ENCODE measurements at regions of chr2 and their contacts with region 1.

Region 1: DNA sequence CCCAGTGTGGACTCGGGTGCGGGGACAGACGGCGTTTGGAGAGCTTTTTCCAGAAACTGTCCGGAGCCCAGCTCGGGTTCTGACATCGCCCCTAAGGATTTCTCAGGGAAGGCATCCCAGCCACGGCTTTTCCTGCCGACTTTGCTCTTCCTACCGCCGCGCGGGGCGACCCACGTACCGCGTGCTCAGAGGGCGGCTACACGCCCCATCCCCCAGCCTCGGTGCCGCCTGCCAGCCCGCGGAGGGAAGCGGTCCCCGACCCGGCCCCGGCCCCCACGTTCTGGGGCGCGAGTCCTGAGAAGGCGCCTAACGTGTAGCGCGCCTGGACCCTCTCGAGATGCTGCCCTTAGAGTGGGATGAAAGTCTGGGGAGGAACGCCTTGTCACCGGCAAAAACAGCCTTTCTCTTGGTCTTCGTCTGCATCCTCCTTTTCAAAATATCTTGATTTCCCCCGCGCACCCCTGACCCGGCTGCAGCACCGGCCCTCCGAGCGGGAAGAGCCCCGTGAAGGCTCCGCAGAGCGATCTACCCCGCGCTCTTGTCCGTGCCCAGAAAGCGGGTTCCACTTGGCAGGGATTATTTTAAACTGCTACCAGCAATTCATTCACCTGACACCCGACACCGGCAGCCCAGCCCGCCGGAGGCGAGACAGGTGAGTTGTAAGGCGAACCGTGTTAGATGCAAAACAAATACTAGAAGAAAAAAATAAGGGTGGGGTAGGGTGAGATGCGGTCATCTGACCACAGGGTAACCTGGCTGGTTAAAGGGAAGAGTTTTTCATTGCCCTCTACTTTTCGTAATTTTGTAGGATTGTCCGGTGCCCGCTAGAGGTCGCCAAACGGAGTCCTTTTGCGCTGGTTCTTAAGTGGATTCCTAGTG is 812 bp upstream of the KCNG3 start:
- DNase-seq: peak; percentile 76
- H3K4me3 Mint-ChIP-seq: peak overlapping the region; percentile 77
- H3K27ac Mint-ChIP-seq: no peak overlapping the region
- H3K4me1 Mint-ChIP-seq: no peaks in the 10 kb centered on the region
- H3K27me3 Mint-ChIP-seq: no peaks in the 10 kb centered on the region
- CTCF ChIP-seq: peak; percentile 81

Region 2: GRCh38 chr2:42256505-42256904 is 238.1 kb before region 1 on chr2:
- CTCF ChIA-PET with region 1: no interaction called
- POLR2A ChIA-PET with region 1: no interaction called
- intact Hi-C with region 1: no loop called
- DNase-seq: no peak
- H3K4me3 Mint-ChIP-seq: no peak overlapping the region
- H3K27ac Mint-ChIP-seq: no peak overlapping the region
- H3K4me1 Mint-ChIP-seq: no peaks in the 10 kb centered on the region
- H3K27me3 Mint-ChIP-seq: no peaks in the 10 kb centered on the region
- CTCF ChIP-seq: no peak

Region 3: GRCh38 chr2:42376758-42377157 is 117.8 kb before region 1 on chr2:
- CTCF ChIA-PET with region 1: no interaction called
- POLR2A ChIA-PET with region 1: no interaction called
- intact Hi-C with region 1: no loop called
- DNase-seq: no peak
- H3K4me3 Mint-ChIP-seq: no peak overlapping the region
- H3K27ac Mint-ChIP-seq: no peak overlapping the region
- H3K4me1 Mint-ChIP-seq: no peaks in the 10 kb centered on the region
- H3K27me3 Mint-ChIP-seq: no peaks in the 10 kb centered on the region
- CTCF ChIP-seq: no peak

Region 4: GRCh38 chr2:42513257-42513918 is 18.8 kb after region 1 on chr2:
- CTCF ChIA-PET with region 1: interaction called, 6 read pairs
- POLR2A ChIA-PET with region 1: no interaction called
- intact Hi-C with region 1: loop called (anchors 1 kb)
- DNase-seq: peak; percentile 80
- H3K4me3 Mint-ChIP-seq: no peak overlapping the region
- H3K27ac Mint-ChIP-seq: no peak overlapping the region
- H3K4me1 Mint-ChIP-seq: peaks cover 7% of the 10 kb centered on the region
- H3K27me3 Mint-ChIP-seq: no peaks in the 10 kb centered on the region
- CTCF ChIP-seq: peak; percentile 64

Measured in MCF 10A (cell line).